MCF 10A (cell line): ENCODE measurements at regions of chrX and their contacts with region 1.

Region 1: GRCh38 chrX:3651276-3651675 is 62.2 kb downstream of the PRKX start:
- DNase-seq: peak; percentile 35
- H3K4me3 Mint-ChIP-seq: no peak overlapping the region
- H3K27ac Mint-ChIP-seq: no peak overlapping the region
- H3K4me1 Mint-ChIP-seq: no peaks in the 10 kb centered on the region
- H3K27me3 Mint-ChIP-seq: no peaks in the 10 kb centered on the region
- CTCF ChIP-seq: peak; percentile 56

Region 2: DNA sequence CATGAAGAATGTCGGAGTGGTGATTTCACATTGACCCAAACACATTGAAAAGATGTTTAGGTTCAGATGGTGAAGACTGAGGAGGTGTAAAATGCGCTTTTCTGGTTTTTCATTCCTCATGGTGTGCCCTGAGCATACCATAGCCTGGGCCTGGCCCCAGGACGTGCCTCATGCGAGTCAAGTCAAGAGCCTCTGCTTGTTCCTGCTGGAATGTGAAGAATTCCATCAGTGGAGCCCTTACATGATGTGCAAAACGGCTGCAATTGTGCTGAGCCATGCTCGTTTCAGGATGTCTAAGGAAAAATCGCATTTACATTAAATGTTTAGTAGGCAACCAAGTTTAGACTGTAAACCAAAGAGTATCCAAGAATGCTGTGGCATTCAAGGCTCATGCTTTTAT is 787.6 kb before region 1 on chrX:
- CTCF ChIA-PET with region 1: no interaction called
- POLR2A ChIA-PET with region 1: no interaction called
- intact Hi-C with region 1: no loop called
- DNase-seq: no peak
- H3K4me3 Mint-ChIP-seq: no peak overlapping the region
- H3K27ac Mint-ChIP-seq: no peak overlapping the region
- H3K4me1 Mint-ChIP-seq: no peaks in the 10 kb centered on the region
- H3K27me3 Mint-ChIP-seq: peaks cover 42% of the 10 kb centered on the region
- CTCF ChIP-seq: no peak

Region 3: GRCh38 chrX:3713225-3713936 is 62.1 kb after region 1 on chrX and contains the start of gene PRKX:
- CTCF ChIA-PET with region 1: interaction called, 6 read pairs
- POLR2A ChIA-PET with region 1: no interaction called
- intact Hi-C with region 1: loop called (anchors 5 kb)
- DNase-seq: peak; percentile 64
- H3K4me3 Mint-ChIP-seq: peak within 1 kb of the TSS; percentile 78
- H3K27ac Mint-ChIP-seq: peak within 1 kb of the TSS; percentile 58
- H3K4me1 Mint-ChIP-seq: peaks cover 16% of the 10 kb centered on the region
- H3K27me3 Mint-ChIP-seq: no peaks in the 10 kb centered on the region
- CTCF ChIP-seq: no peak
- total RNA-seq, gene PRKX: 35.3 and 35.6 TPM in 2 replicates

Region 4: DNA sequence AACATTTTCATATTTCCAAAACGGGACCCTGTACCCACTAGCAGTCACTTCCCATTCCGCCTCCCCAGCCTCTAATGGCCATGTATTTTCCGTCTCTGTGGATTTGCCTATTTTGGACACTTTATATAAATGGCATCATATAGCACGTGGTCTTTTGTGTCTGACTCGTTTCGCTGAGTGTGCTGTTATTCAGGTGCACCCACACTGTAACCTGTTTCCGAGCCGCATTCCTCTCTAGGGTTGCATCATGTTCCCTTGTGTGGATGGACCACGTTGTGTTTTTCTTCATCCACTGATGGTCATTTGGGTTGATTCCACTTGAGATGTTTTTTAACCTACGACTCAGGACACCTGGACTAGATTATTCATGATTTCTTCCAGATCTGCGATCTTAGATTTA is 147.3 kb after region 1 on chrX:
- CTCF ChIA-PET with region 1: interaction called, 4 read pairs
- POLR2A ChIA-PET with region 1: interaction called, 3 read pairs
- intact Hi-C with region 1: loop called (anchors 10 kb)
- DNase-seq: no peak
- H3K4me3 Mint-ChIP-seq: no peak overlapping the region
- H3K27ac Mint-ChIP-seq: no peak overlapping the region
- H3K4me1 Mint-ChIP-seq: no peaks in the 10 kb centered on the region
- H3K27me3 Mint-ChIP-seq: peaks cover 28% of the 10 kb centered on the region
- CTCF ChIP-seq: no peak

Region 5: DNA sequence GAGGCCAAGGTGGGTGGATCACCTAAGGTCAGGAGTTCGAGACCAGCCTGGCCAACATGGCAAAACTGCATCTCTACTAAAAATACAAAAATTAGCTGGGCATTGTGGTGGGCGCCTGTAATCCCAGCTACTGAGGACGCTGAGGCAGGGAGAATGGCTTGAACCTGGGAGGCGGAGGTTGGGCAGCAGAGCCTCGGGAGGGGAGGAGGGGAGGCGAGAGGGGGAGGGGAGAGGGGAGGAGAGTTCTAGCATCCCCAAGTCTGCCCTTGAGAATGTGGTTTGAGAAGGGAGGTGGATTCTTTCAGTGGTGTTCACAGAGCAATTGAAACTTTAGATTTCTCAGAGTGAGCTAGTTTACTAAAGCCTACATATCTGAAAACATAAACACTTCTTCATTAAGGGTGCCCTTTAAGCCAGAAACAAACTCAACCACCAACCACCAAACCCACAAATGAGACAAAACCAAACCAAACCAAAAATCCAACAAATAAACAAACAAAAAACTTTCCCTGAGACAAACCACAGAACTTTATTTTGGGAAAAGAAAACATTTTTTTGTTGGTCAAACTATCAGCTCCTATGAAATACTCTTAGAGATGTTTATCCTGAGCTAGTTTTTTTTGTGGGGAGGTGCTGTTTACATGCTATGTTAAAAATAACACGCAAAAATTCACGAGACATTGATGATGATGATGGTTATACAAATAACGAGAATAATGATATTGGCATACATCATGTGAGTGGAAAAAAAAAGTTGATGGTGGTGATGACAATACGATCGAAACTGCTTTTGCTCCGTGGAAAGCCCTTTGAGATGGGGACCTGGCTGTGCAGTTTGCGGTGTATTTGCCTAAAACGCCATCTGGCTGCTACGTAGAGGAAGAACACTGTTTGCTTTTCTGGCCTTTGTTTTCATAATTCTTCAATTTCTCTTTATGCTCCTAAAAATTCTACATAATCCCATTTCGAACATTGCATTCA is 160.3 kb after region 1 on chrX:
- CTCF ChIA-PET with region 1: interaction called, 13 read pairs
- POLR2A ChIA-PET with region 1: no interaction called
- intact Hi-C with region 1: loop called (anchors 1 kb)
- DNase-seq: peak; percentile 23
- H3K4me3 Mint-ChIP-seq: no peak overlapping the region
- H3K27ac Mint-ChIP-seq: no peak overlapping the region
- H3K4me1 Mint-ChIP-seq: no peaks in the 10 kb centered on the region
- H3K27me3 Mint-ChIP-seq: peaks cover 30% of the 10 kb centered on the region
- CTCF ChIP-seq: peak; percentile 25